A673 (cell line): ENCODE measurements at regions of chr9 and their contacts with region 1.

Region 1: DNA sequence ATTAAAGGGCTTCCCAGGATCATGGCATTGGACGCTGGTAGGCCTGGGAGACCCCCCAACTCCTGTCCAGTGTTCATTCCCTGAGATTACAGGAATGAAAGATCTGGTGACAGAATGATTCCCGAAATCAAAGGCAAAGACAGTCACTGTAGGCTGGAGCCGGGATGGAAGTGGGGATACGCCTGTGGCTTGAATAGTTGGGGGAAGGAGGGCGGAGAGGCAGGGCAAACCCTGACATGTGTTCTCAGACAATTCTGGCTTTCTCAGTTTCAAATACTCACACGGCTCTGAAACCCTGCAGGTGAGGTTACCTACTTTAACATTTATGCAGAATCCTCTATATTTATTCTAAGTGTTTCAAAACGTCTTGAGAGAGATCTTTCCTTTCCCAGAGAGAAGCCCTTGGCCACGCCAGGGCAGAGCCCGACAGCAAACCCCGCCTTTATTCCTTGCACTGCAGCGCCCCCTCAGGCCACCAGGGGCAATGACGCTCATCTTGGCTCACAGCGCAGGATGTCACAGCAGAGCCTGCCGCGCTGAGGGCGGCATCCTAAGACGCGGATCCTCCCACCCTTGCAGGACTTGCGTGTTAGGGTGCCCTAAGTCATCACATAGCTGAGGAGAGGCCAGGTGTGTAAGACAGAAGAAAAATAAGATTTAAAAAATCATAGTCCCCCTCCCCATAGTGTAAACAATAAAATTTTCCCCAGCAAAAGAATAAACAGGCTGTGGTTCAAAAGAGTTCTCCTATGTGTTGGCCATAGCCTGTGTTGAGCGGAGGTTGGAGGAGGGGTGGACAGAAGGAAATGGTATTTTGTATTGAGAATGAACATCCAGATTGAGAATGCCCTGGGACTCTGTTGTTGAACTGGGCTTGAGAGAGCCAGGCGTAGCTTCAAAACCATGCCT is 284.5 kb downstream of the NTRK2 start:
- DNase-seq: peak; percentile 66
- H3K4me3 ChIP-seq: no peak overlapping the region
- H3K27ac ChIP-seq: no peak overlapping the region
- H3K4me1 ChIP-seq: no peaks in the 10 kb centered on the region
- H3K27me3 ChIP-seq: no peaks in the 10 kb centered on the region
- CTCF ChIP-seq: peak; percentile 94

Region 2: DNA sequence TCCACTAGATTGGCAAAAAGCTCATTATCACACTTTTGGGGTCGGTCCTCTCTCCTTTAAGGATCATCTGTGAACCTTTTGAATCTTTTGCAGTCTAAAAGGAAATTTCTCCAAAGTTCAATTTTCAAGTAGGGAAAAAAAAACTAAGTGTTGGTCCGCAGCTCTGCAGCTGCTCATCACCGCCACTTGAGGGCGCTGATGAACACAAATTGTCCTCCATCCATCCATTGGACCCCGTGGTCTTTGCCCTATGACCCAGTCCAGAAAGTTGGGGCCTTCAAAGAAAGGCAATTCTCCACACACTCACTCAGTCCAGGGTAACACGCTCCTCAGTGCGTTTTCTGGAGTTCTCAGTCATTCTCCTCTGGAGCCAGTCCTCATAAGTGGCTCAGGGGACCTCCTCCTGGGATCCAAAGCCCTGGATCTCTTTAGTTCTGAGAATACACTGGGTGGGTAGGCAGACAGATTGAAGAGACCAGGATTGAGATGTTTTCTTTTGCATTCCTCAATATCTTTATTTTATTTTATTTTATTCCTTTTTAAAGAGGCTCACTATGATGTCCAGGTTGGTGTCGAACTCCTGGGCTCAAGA is 549.9 kb before region 1 on chr9:
- CTCF ChIA-PET with region 1: no interaction called
- POLR2A ChIA-PET with region 1: no interaction called
- intact Hi-C with region 1: loop called (anchors 5 kb)
- DNase-seq: peak; percentile 15
- H3K4me3 ChIP-seq: no peak overlapping the region
- H3K27ac ChIP-seq: no peak overlapping the region
- H3K4me1 ChIP-seq: no peaks in the 10 kb centered on the region
- H3K27me3 ChIP-seq: no peaks in the 10 kb centered on the region
- CTCF ChIP-seq: peak; percentile 90

Region 3: DNA sequence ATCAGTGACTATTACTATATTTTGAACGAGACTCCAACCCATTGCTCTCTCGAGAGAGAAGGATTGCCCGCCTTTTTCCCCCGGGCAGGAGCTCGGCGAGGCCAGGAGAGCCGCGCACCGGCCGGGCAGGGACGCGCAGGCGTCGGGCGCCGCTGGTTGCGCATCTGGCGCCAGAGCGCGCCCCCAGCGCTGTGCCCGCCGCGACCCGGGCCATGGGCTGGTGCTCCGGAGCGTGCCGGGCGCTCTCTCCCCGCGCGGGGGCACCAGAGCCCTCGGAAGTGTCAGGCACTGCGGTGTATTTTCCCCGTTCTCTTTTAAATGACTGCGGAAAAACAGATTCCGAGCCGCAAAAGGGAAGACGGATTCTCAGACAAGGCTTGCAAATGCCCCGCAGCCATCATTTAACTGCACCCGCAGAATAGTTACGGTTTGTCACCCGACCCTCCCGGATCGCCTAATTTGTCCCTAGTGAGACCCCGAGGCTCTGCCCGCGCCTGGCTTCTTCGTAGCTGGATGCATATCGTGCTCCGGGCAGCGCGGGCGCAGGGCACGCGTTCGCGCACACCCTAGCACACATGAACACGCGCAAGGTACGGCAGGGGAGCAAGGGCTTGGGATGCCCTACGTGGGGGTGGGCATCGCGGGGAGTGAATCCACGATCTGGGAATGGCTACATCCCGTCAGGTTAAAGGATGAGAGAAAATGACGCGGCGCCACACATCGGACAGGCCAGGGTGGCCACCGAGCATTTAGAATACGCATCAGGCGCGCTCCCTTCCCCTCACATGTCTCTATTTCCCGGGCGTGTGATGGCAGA is 285.6 kb before region 1 on chr9:
- CTCF ChIA-PET with region 1: no interaction called
- POLR2A ChIA-PET with region 1: no interaction called
- intact Hi-C with region 1: loop called (anchors 10 kb)
- DNase-seq: peak; percentile 77
- H3K4me3 ChIP-seq: peak overlapping the region; percentile 31
- H3K27ac ChIP-seq: no peak overlapping the region
- H3K4me1 ChIP-seq: peaks cover 5% of the 10 kb centered on the region
- H3K27me3 ChIP-seq: peaks cover 76% of the 10 kb centered on the region
- CTCF ChIP-seq: peak; percentile 55

Region 4: GRCh38 chr9:84701801-84702200 is 252.2 kb before region 1 on chr9:
- CTCF ChIA-PET with region 1: interaction called, 3 read pairs
- POLR2A ChIA-PET with region 1: no interaction called
- intact Hi-C with region 1: loop called (anchors 5 kb)
- DNase-seq: no peak
- H3K4me3 ChIP-seq: no peak overlapping the region
- H3K27ac ChIP-seq: no peak overlapping the region
- H3K4me1 ChIP-seq: no peaks in the 10 kb centered on the region
- H3K27me3 ChIP-seq: peaks cover 5% of the 10 kb centered on the region
- CTCF ChIP-seq: no peak

Region 5: GRCh38 chr9:85064811-85065371 is 110.8 kb after region 1 on chr9:
- CTCF ChIA-PET with region 1: no interaction called
- POLR2A ChIA-PET with region 1: no interaction called
- intact Hi-C with region 1: no loop called
- DNase-seq: no peak
- H3K4me3 ChIP-seq: no peak overlapping the region
- H3K27ac ChIP-seq: no peak overlapping the region
- H3K4me1 ChIP-seq: no peaks in the 10 kb centered on the region
- H3K27me3 ChIP-seq: no peaks in the 10 kb centered on the region
- CTCF ChIP-seq: no peak